ENCODE measurements at regions of chr3 and their contacts with region 1.

Region 1: GRCh38 chr3:101928890-101929289 is 79.6 kb downstream of the NFKBIZ start:
- DNase-seq: peak; percentile 95
- ATAC-seq: peak; percentile 41
- H3K4me3 ChIP-seq: no peak overlapping the region
- H3K27ac ChIP-seq: peak overlapping the region; percentile 91
- H3K4me1 ChIP-seq: peaks cover 38% of the 10 kb centered on the region
- H3K27me3 ChIP-seq: no peaks in the 10 kb centered on the region
- CTCF ChIP-seq: no peak

Region 2: DNA sequence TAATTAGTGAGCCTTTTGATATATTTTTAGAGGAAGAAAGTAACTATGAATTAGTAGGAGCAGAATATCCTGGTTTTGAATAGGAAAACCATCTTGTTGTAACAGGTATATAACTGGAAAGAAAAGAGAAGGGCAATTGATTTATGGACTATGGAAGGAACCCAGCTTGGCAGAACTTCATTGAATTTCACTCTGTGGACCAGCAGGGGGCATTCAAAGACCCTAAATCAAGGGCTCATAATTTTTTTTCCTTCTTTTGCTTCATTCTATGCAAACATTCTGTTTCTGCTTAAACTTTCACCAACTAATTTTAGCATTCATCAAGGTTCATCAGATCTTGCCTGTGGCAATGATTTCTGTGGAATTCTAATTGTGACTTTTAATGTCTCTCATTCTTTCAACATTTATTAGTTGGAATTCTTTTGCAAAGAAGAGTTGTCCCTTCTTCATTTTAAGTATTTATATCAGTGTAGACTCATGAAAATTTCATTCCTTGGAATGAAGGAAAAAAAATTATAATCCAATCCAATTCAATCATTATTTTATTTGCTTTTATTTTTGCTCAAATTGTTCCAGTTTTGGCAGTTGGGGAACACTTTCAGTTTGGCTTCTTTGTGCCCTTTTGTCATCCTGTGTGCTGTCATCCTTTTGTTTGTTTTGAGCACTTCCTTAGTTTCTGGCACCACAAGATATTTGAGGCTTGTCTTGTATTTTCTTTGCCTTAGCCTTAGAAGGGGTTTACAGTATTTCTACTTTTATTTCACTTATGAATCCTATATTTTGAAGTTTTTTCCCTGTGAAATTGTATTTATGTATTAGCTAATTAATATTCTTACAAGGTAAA is 119.5 kb before region 1 on chr3:
- CTCF ChIA-PET with region 1: no interaction called
- POLR2A ChIA-PET with region 1: no interaction called
- intact Hi-C with region 1: loop called (anchors 1 kb)
- DNase-seq: peak; percentile 74
- ATAC-seq: peak; percentile 78
- H3K4me3 ChIP-seq: no peak overlapping the region
- H3K27ac ChIP-seq: peak overlapping the region; percentile 58
- H3K4me1 ChIP-seq: peaks cover 19% of the 10 kb centered on the region
- H3K27me3 ChIP-seq: no peaks in the 10 kb centered on the region
- CTCF ChIP-seq: peak; percentile 93

Region 3: DNA sequence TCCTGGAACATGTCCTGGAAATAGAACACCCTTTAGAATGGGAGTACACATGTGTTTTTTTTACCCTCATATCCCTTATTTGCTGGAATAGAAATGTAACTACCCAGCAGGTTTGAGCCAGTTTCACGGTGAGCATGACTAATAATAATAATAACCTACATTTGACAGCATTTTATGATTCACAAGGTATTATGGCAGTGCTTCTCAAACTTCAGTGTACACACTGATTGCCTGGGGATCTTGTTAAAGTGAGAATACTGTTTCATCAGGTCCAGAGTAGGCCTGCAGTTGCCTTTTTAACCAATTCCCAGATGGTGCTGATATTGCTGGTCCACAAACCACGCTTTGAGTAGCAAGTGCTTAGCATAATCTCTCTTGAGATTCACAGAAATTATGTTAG is 15.7 kb before region 1 on chr3:
- CTCF ChIA-PET with region 1: no interaction called
- POLR2A ChIA-PET with region 1: no interaction called
- intact Hi-C with region 1: loop called (anchors 1 kb)
- DNase-seq: peak; percentile 79
- ATAC-seq: peak; percentile 94
- H3K4me3 ChIP-seq: no peak overlapping the region
- H3K27ac ChIP-seq: peak overlapping the region; percentile 80
- H3K4me1 ChIP-seq: peaks cover 18% of the 10 kb centered on the region
- H3K27me3 ChIP-seq: no peaks in the 10 kb centered on the region
- CTCF ChIP-seq: no peak

Region 4: DNA sequence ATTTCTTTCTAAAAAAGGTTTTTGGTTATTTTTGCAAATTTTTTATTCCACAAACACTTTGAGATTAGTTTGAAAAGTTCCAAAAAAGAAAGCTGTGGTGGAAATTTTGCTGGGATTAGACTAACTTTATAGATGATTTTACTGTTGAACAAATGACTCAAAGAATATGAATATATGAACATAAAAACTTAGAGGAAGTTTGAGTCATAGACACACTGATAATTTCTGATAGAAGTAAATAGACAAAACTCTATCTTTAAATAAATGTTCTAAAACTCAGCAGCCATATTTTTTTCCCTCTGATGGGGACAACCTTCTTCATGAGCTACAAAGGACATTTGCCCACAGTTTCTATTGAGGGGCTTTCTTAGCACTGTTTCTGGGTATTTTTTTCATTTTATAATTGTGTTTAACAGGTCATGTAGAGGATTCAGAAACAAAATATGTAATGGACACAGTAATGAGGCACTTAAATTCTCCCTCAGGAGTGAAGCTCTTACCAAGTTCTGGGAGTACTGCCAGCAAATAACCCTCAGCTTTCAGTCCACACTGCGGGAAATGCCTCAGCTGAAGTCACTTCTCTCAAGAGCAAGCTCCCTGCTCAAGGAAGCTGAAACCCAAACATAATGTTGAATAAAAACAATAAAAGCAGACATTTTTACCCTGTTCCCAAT is 78.1 kb after region 1 on chr3:
- CTCF ChIA-PET with region 1: no interaction called
- POLR2A ChIA-PET with region 1: no interaction called
- intact Hi-C with region 1: loop called (anchors 1 kb)
- DNase-seq: peak; percentile 95
- ATAC-seq: peak; percentile 96
- H3K4me3 ChIP-seq: peak overlapping the region; percentile 20; the same call in 1 of the 2 replicates
- H3K27ac ChIP-seq: peak overlapping the region; percentile 92
- H3K4me1 ChIP-seq: peaks cover 26% of the 10 kb centered on the region
- H3K27me3 ChIP-seq: no peaks in the 10 kb centered on the region
- CTCF ChIP-seq: no peak

Region 5: DNA sequence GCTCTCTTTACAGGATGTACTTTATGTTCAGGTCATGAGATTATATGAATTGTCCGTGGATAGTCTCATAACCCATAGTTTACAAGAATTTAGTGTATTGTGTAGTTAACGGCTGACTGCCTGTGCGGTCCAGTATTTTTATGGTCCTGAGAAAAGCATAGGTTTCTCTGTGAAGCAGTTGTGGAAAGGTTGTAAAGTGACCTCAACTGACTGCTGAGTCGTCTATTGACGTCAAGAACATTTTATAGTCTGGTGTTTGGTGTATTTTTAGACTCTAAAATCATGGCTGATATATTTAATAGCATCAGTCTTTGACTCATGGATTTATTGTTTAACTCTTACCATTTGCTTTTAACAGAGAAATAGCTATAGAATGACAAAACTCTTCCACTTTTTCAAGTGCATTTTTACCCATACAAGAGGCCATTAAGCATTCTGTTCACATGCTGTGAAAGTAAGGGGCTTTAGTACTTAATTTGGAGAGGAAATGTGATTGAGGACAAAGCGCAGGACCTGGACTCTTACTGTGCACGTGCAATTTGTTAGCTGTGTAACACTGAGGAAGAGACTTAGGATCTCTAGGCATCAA is 161.1 kb after region 1 on chr3:
- CTCF ChIA-PET with region 1: interaction called, 3 read pairs
- POLR2A ChIA-PET with region 1: interaction called, 5 read pairs
- intact Hi-C with region 1: loop called (anchors 1 kb)
- DNase-seq: peak; percentile 89
- ATAC-seq: peak; percentile 89
- H3K4me3 ChIP-seq: no peak overlapping the region
- H3K27ac ChIP-seq: peak overlapping the region; percentile 97
- H3K4me1 ChIP-seq: peaks cover 30% of the 10 kb centered on the region
- H3K27me3 ChIP-seq: no peaks in the 10 kb centered on the region
- CTCF ChIP-seq: no peak

Region 6: GRCh38 chr3:102174312-102174712 is 245.4 kb after region 1 on chr3:
- CTCF ChIA-PET with region 1: interaction called, 4 read pairs
- POLR2A ChIA-PET with region 1: no interaction called
- intact Hi-C with region 1: loop called (anchors 1 kb)
- DNase-seq: peak; percentile 91
- ATAC-seq: peak; percentile 82
- H3K4me3 ChIP-seq: 0 out of 2 replicates have a peak overlapping the region, but pooled peaks have one; percentile 7
- H3K27ac ChIP-seq: peak overlapping the region; percentile 97
- H3K4me1 ChIP-seq: peaks cover 42% of the 10 kb centered on the region
- H3K27me3 ChIP-seq: no peaks in the 10 kb centered on the region
- CTCF ChIP-seq: no peak